ENCODE measurements at regions of chr19 and their contacts with region 1.

Region 1: DNA sequence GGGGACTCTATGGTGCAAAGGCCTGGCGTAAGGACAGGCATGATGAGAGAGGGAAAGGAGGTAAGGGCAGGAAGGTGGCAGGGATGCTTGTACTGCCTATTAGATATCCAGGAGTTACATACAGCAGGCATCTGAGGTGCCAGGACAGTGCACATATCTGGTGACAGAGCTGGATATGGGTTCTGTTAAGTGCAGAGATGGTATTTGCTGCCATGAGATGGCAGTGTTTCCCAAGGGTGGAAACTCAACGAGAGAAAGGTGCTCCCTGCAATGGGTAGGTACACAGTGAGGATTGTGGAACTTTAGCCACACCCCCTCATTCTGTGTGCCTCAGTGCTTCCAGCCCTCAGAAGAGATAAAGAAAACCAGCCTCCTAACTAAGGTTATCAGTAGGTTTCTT is 6.9 kb downstream of the TNPO2 start:
- DNase-seq: no peak
- H3K4me3 ChIP-seq: no peak overlapping the region
- CTCF ChIP-seq: peak; percentile 12

Region 2: GRCh38 chr19:12596485-12596884 is 120.4 kb before region 1 on chr19:
- CTCF ChIA-PET with region 1: no interaction called
- POLR2A ChIA-PET with region 1: no interaction called
- DNase-seq: no peak
- H3K4me3 ChIP-seq: no peak overlapping the region
- CTCF ChIP-seq: no peak

Region 3: GRCh38 chr19:12766051-12766521 is 49.2 kb after region 1 on chr19:
- CTCF ChIA-PET with region 1: interaction called, 10 read pairs
- POLR2A ChIA-PET with region 1: no interaction called
- DNase-seq: no peak
- H3K4me3 ChIP-seq: peak overlapping the region; percentile 68
- CTCF ChIP-seq: peak; percentile 99